ENCODE measurements at regions of chr1 and their contacts with region 1.

Region 1: GRCh38 chr1:52592637-52593323 is 9.4 kb upstream of the GPX7 start:
- DNase-seq: no peak
- H3K4me3 ChIP-seq: no peak overlapping the region
- H3K4me3 Mint-ChIP-seq: no peak overlapping the region
- H3K27ac ChIP-seq: no peak overlapping the region
- H3K27ac Mint-ChIP-seq: peak overlapping the region in 2 of 8 donors; percentile 46 to 52
- H3K4me1 ChIP-seq: no peaks in the 10 kb centered on the region
- H3K4me1 Mint-ChIP-seq: peaks cover 0 to 2% (median 0%) of the 10 kb centered on the region in 3 donors
- H3K27me3 ChIP-seq: no peaks in the 10 kb centered on the region
- H3K27me3 Mint-ChIP-seq: no peaks in the 10 kb centered on the region

Region 2: GRCh38 chr1:52582116-52582696 is 10.6 kb before region 1 on chr1:
- CTCF ChIA-PET with region 1: no interaction called
- POLR2A ChIA-PET with region 1: interaction called, 12 read pairs
- DNase-seq: no peak
- H3K4me3 ChIP-seq: no peak overlapping the region
- H3K4me3 Mint-ChIP-seq: no peak overlapping the region
- H3K27ac ChIP-seq: no peak overlapping the region
- H3K27ac Mint-ChIP-seq: peak overlapping the region in 1 of 8 donors; percentile 8
- H3K4me1 ChIP-seq: no peaks in the 10 kb centered on the region
- H3K4me1 Mint-ChIP-seq: peaks cover 5 to 10% (median 9%) of the 10 kb centered on the region in 3 donors
- H3K27me3 ChIP-seq: no peaks in the 10 kb centered on the region
- H3K27me3 Mint-ChIP-seq: no peaks in the 10 kb centered on the region

Region 3: DNA sequence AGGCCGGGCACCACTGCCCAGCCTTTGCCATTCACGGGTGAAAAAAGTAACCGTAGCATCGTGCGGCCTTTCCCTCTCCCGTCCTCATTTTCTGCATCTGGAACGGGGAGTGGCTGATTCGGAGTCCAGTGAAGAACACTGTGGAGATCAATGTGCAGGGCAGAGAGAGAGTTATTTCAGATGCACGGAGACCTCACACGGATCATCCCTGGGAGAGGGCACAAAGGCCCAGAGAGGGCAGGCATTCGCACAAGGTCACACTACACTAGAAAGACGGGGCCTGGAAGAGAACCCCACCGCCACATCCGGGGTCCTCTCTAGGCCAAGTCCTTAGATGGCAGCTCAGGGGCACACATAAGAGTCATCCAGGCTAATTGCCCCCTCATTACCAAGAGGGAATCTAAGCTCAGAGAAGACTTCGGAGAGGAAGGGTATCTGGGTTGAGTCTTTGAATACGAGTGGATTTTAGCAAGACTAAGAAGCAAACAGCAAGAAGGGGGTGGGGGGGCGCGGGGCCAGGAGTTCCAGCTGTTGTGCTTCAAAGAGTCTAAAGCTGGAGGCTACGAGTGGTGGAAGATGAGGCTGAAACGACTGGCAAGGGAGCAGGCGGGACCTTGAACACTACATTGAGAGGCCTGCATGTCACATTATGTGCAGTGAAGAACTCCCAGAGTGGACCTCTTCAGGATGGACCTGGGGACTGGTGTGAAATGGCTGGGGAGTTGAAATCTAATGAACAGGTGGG is 10.2 kb after region 1 on chr1:
- CTCF ChIA-PET with region 1: no interaction called
- POLR2A ChIA-PET with region 1: no interaction called
- DNase-seq: peak in 4 of 5 donors; percentile 4 to 53 (median 21)
- H3K4me3 ChIP-seq: peak overlapping the region; percentile 80
- H3K4me3 Mint-ChIP-seq: peak overlapping the region; percentile 80 to 97 (median 91)
- H3K27ac ChIP-seq: peak overlapping the region; percentile 66
- H3K27ac Mint-ChIP-seq: peak overlapping the region; percentile 82 to 97 (median 95)
- H3K4me1 ChIP-seq: peaks cover 40% of the 10 kb centered on the region
- H3K4me1 Mint-ChIP-seq: peaks cover 44 to 66% (median 54%) of the 10 kb centered on the region in 3 donors
- H3K27me3 ChIP-seq: no peaks in the 10 kb centered on the region
- H3K27me3 Mint-ChIP-seq: peaks cover 0 to 2% of the 10 kb centered on the region in 2 donors

Region 4: GRCh38 chr1:52632732-52633290 is 40.0 kb after region 1 on chr1 and contains the start of gene SHISAL2A:
- CTCF ChIA-PET with region 1: no interaction called
- POLR2A ChIA-PET with region 1: no interaction called
- DNase-seq: peak; percentile 50 to 83 (median 74)
- H3K4me3 ChIP-seq: peak within 1 kb of the TSS; percentile 66
- H3K4me3 Mint-ChIP-seq: peak within 1 kb of the TSS; percentile 81 to 96 (median 93)
- H3K27ac ChIP-seq: peak within 1 kb of the TSS; percentile 65
- H3K27ac Mint-ChIP-seq: peak within 1 kb of the TSS; percentile 96 to 100 (median 99)
- H3K4me1 ChIP-seq: peaks cover 75% of the 10 kb centered on the region
- H3K4me1 Mint-ChIP-seq: peaks cover 66 to 76% (median 68%) of the 10 kb centered on the region in 3 donors
- H3K27me3 ChIP-seq: no peaks in the 10 kb centered on the region
- H3K27me3 Mint-ChIP-seq: no peaks in the 10 kb centered on the region
- total RNA-seq, gene SHISAL2A: 15.7 to 16.7 TPM

Measured in CD8-positive, alpha-beta memory T cell (primary cell).